Endothelial cell of umbilical vein (primary cell): ENCODE measurements at regions of chr12 and their contacts with region 1.

Region 1: DNA sequence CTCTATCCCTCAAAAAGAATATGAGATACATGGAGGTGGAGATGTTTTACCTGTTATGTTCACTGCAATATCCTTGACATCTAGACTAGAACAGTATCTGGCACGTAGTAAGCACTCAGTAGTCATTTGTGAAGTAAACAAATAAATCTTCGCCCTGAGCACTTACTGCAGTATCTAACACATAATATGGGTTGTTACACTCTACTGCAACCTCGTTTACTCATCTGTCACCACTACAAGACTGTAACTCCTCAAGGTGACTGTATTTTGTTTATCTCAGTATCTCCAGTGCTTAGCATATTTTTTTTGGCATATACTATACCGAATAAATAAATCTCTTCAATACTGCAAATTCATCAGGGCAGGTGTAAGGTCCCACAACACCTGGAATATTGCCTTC is 66.1 kb downstream of the WASHC3 start:
- DNase-seq: no peak
- H3K4me3 ChIP-seq: no peak overlapping the region
- H3K27ac ChIP-seq: no peak overlapping the region
- H3K4me1 ChIP-seq: no peaks in the 10 kb centered on the region
- H3K27me3 ChIP-seq: peaks cover 0 to 5% of the 10 kb centered on the region in 2 experiments
- CTCF ChIP-seq: no peak
- POLR2A ChIP-seq: no peak

Region 2: GRCh38 chr12:102033991-102034745 is 38.5 kb after region 1 on chr12:
- CTCF ChIA-PET with region 1: no interaction called
- POLR2A ChIA-PET with region 1: no interaction called
- dilution Hi-C with region 1: no loop called
- intact Hi-C with region 1: loop called (anchors 1 kb)
- DNase-seq: no peak
- H3K4me3 ChIP-seq: no peak overlapping the region
- H3K27ac ChIP-seq: no peak overlapping the region
- H3K4me1 ChIP-seq: no peaks in the 10 kb centered on the region
- H3K27me3 ChIP-seq: no peaks in the 10 kb centered on the region
- CTCF ChIP-seq: no peak
- POLR2A ChIP-seq: no peak